ENCODE measurements at regions of chr2 and their contacts with region 1.

Region 1: DNA sequence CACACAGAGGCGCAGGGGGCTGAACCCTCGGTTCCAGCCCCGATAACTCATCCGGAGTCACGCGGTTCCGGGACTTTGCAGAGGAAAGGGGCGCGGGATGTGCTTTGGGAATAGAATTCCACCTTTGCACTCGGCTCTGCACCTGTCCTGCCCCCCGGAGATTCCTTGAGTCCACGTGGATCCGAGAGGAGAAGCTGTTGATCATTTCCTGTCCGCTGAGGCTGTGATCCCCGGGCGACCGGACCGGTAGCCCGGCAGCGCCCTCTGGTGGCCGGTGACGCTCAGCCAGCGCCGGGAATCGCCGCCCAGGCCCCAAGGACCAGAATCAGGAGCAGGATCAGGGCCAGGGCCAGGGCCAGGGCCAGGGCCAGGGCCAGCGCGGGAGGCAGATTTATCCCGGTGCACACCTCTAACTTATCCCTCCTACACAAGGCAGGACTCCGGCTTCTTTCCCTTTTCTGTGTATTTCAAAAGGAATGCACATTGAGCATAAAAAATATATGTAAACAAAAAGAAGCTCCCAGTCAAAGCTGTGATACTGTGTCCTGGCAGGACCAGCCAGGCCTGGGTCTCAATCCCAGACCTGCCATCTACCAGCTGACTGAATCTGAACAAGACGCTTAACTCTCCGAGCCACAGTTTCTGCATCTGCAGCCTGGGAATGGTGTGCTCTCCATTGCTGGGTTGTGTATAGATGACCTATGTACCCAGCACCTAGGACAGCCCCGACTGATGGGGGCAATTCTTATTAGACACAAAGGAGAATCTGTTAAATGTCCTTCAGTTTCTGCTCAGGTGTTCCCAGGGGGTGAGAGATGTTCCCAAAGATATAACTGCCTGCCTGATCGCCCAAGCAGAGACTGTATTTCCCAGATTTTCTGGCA is 8.5 kb upstream of the SPATA3 start:
- DNase-seq: peak; percentile 56
- H3K4me3 ChIP-seq: peak overlapping the region in 2 of 3 experiments; percentile 2 to 17
- H3K27ac ChIP-seq: no peak overlapping the region
- H3K4me1 ChIP-seq: peaks cover 4% of the 10 kb centered on the region
- H3K27me3 ChIP-seq: peaks cover 7 to 21% of the 10 kb centered on the region in 2 experiments
- CTCF ChIP-seq: peak; percentile 96 to 98
- POLR2A ChIP-seq: no peak

Region 2: GRCh38 chr2:230830428-230830827 is 157.0 kb before region 1 on chr2:
- CTCF ChIA-PET with region 1: interaction called, 287 read pairs
- POLR2A ChIA-PET with region 1: no interaction called
- dilution Hi-C with region 1: no loop called
- intact Hi-C with region 1: no loop called
- DNase-seq: no peak
- H3K4me3 ChIP-seq: no peak overlapping the region
- H3K27ac ChIP-seq: no peak overlapping the region
- H3K4me1 ChIP-seq: no peaks in the 10 kb centered on the region
- H3K27me3 ChIP-seq: peaks cover 11 to 27% of the 10 kb centered on the region in 2 experiments
- CTCF ChIP-seq: no peak
- POLR2A ChIP-seq: no peak

Region 3: GRCh38 chr2:230847883-230848388 is 139.4 kb before region 1 on chr2:
- CTCF ChIA-PET with region 1: interaction called, 46 read pairs
- POLR2A ChIA-PET with region 1: no interaction called
- dilution Hi-C with region 1: no loop called
- intact Hi-C with region 1: loop called (anchors 1 kb)
- DNase-seq: peak; percentile 78
- H3K4me3 ChIP-seq: no peak overlapping the region
- H3K27ac ChIP-seq: no peak overlapping the region
- H3K4me1 ChIP-seq: no peaks in the 10 kb centered on the region
- H3K27me3 ChIP-seq: peaks cover 7% of the 10 kb centered on the region in 2 experiments
- CTCF ChIP-seq: peak; percentile 96 to 97
- POLR2A ChIP-seq: no peak

Region 4: GRCh38 chr2:230902180-230902899 is 85.0 kb before region 1 on chr2:
- CTCF ChIA-PET with region 1: interaction called, 51 read pairs
- POLR2A ChIA-PET with region 1: no interaction called
- dilution Hi-C with region 1: no loop called
- intact Hi-C with region 1: loop called (anchors 1 kb)
- DNase-seq: no peak
- H3K4me3 ChIP-seq: no peak overlapping the region
- H3K27ac ChIP-seq: no peak overlapping the region
- H3K4me1 ChIP-seq: no peaks in the 10 kb centered on the region
- H3K27me3 ChIP-seq: peaks cover 0 to 2% of the 10 kb centered on the region in 2 experiments
- CTCF ChIP-seq: peak; percentile 59 to 62
- POLR2A ChIP-seq: no peak

Region 5: GRCh38 chr2:231007286-231008007 is 20.1 kb after region 1 on chr2:
- CTCF ChIA-PET with region 1: interaction called, 13 read pairs
- POLR2A ChIA-PET with region 1: no interaction called
- dilution Hi-C with region 1: no loop called
- intact Hi-C with region 1: no loop called
- DNase-seq: no peak
- H3K4me3 ChIP-seq: no peak overlapping the region
- H3K27ac ChIP-seq: no peak overlapping the region
- H3K4me1 ChIP-seq: no peaks in the 10 kb centered on the region
- H3K27me3 ChIP-seq: peaks cover 1 to 7% of the 10 kb centered on the region in 2 experiments
- CTCF ChIP-seq: no peak
- POLR2A ChIP-seq: no peak

Measured in endothelial cell of umbilical vein (primary cell).